PC-3 (cell line): ENCODE measurements at regions of chr12 and their contacts with region 1.

Region 1: GRCh38 chr12:109858764-109859163 is 21.6 kb downstream of the GLTP start:
- DNase-seq: no peak
- ATAC-seq: no peak
- H3K4me3 ChIP-seq: no peak overlapping the region
- H3K27ac ChIP-seq: no peak overlapping the region
- H3K4me1 ChIP-seq: no peaks in the 10 kb centered on the region
- H3K27me3 ChIP-seq: no peaks in the 10 kb centered on the region
- CTCF ChIP-seq: no peak

Region 2: GRCh38 chr12:109927622-109928021 is 68.9 kb after region 1 on chr12:
- CTCF ChIA-PET with region 1: no interaction called
- POLR2A ChIA-PET with region 1: no interaction called
- intact Hi-C with region 1: loop called (anchors 1 kb)
- DNase-seq: peak; percentile 69
- ATAC-seq: peak; percentile 84
- H3K4me3 ChIP-seq: no peak overlapping the region
- H3K27ac ChIP-seq: no peak overlapping the region
- H3K4me1 ChIP-seq: no peaks in the 10 kb centered on the region
- H3K27me3 ChIP-seq: no peaks in the 10 kb centered on the region
- CTCF ChIP-seq: peak; percentile 85

Region 3: GRCh38 chr12:110015132-110015531 is 156.4 kb after region 1 on chr12:
- CTCF ChIA-PET with region 1: no interaction called
- POLR2A ChIA-PET with region 1: no interaction called
- intact Hi-C with region 1: no loop called
- DNase-seq: no peak
- ATAC-seq: no peak
- H3K4me3 ChIP-seq: no peak overlapping the region
- H3K27ac ChIP-seq: no peak overlapping the region
- H3K4me1 ChIP-seq: no peaks in the 10 kb centered on the region
- H3K27me3 ChIP-seq: no peaks in the 10 kb centered on the region
- CTCF ChIP-seq: no peak